ENCODE measurements at regions of chr11 and their contacts with region 1.

Region 1: DNA sequence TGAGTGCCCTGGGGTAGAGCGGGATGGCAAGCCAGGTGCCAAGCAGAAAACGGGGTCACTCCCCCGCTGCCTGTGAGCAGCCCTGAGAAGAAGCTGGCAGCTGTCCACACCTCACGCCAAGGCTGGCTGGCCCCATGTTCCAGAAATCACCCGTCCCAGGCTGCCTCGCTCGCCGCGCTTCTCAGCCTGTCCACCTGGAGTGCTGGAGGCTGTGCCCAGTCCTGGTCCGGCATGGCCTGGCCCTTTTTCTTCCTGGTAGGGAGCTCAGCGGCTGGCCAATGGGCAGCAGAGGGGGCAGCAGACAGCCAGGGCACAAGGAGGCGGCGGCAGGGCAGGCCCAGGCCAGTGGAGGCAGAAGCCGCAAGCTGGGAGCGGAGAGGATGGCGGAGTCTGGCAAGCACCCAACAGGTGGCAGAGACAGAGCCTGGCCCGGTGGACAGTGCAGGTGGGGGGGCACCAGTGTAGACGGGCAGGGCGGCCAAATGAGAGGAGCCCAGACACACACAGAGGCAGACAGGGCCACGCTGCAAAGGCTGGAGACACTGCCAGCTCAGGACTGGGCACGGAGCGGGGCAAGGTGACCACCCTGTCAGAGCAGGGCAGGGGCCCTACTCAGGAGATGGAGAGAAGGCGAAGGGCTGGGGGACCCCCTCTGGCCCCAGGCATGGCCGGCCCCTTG is 37.2 kb upstream of the TH start:
- DNase-seq: peak; percentile 9
- H3K4me3 ChIP-seq: no peak overlapping the region
- H3K27ac ChIP-seq: no peak overlapping the region
- H3K4me1 ChIP-seq: peaks cover 0 to 19% (median 12%) of the 10 kb centered on the region in 4 donors
- H3K27me3 ChIP-seq: no peaks in the 10 kb centered on the region
- CTCF ChIP-seq: peak in 1 of 5 experiments; percentile 24
- EP300 ChIP-seq: no peak
- POLR2A ChIP-seq: no peak

Region 2: GRCh38 chr11:2269601-2270321 is 60.9 kb after region 1 on chr11:
- in situ Hi-C with region 1: loop called in 1 of 4 experiments (anchors 10 kb)
- intact Hi-C with region 1: no loop called
- DNase-seq: peak; percentile 66
- H3K4me3 ChIP-seq: peak overlapping the region; percentile 10 to 51 (median 34)
- H3K27ac ChIP-seq: peak overlapping the region; percentile 57 to 66 (median 62)
- H3K4me1 ChIP-seq: peaks cover 0 to 30% (median 26%) of the 10 kb centered on the region in 4 donors
- H3K27me3 ChIP-seq: peaks cover 51% of the 10 kb centered on the region
- CTCF ChIP-seq: peak in 2 of 5 experiments; percentile 31 to 32
- EP300 ChIP-seq: no peak
- POLR2A ChIP-seq: no peak

Region 3: GRCh38 chr11:2298795-2299761 is 90.2 kb after region 1 on chr11:
- in situ Hi-C with region 1: loop called in 1 of 4 experiments (anchors 10 kb)
- intact Hi-C with region 1: no loop called
- DNase-seq: peak; percentile 44
- H3K4me3 ChIP-seq: no peak overlapping the region
- H3K27ac ChIP-seq: no peak overlapping the region
- H3K4me1 ChIP-seq: peaks cover 0 to 20% (median 5%) of the 10 kb centered on the region in 4 donors
- H3K27me3 ChIP-seq: no peaks in the 10 kb centered on the region
- CTCF ChIP-seq: peak in 4 of 5 experiments; percentile 30 to 50 (median 39)
- EP300 ChIP-seq: no peak
- POLR2A ChIP-seq: no peak

Region 4: GRCh38 chr11:3880724-3881123 is 1671.9 kb after region 1 on chr11:
- in situ Hi-C with region 1: no loop called
- intact Hi-C with region 1: no loop called
- DNase-seq: no peak
- H3K4me3 ChIP-seq: no peak overlapping the region
- H3K27ac ChIP-seq: peak overlapping the region in 2 of 4 donors; percentile 28 to 50
- H3K4me1 ChIP-seq: peaks cover 26 to 48% (median 35%) of the 10 kb centered on the region in 4 donors
- H3K27me3 ChIP-seq: no peaks in the 10 kb centered on the region
- CTCF ChIP-seq: no peak
- EP300 ChIP-seq: no peak
- POLR2A ChIP-seq: no peak

Measured in transverse colon (tissue), 4 donors.